ENCODE measurements at regions of chr5 and their contacts with region 1.

Region 1: GRCh38 chr5:64147849-64148441 is 17.7 kb upstream of the RNF180 start:
- DNase-seq: peak; percentile 55 to 73 (median 61)
- ATAC-seq: peak; percentile 92 to 97 (median 96)
- H3K4me3 ChIP-seq: no peak overlapping the region
- H3K27ac ChIP-seq: no peak overlapping the region
- H3K4me1 ChIP-seq: peaks cover 0 to 5% (median 0%) of the 10 kb centered on the region in 4 donors
- H3K27me3 ChIP-seq: no peaks in the 10 kb centered on the region
- CTCF ChIP-seq: peak; percentile 76 to 86 (median 78)
- POLR2A ChIP-seq: no peak

Region 2: GRCh38 chr5:64069486-64069885 is 78.5 kb before region 1 on chr5:
- intact Hi-C with region 1: no loop called
- DNase-seq: no peak
- ATAC-seq: no peak
- H3K4me3 ChIP-seq: no peak overlapping the region
- H3K27ac ChIP-seq: no peak overlapping the region
- H3K4me1 ChIP-seq: no peaks in the 10 kb centered on the region
- H3K27me3 ChIP-seq: no peaks in the 10 kb centered on the region
- CTCF ChIP-seq: no peak
- POLR2A ChIP-seq: no peak

Region 3: GRCh38 chr5:64207978-64208377 is 60.0 kb after region 1 on chr5:
- intact Hi-C with region 1: loop called in 1 of 2 experiments (anchors 10 kb)
- DNase-seq: no peak
- ATAC-seq: peak in 2 of 4 donors; percentile 34 to 45
- H3K4me3 ChIP-seq: no peak overlapping the region
- H3K27ac ChIP-seq: no peak overlapping the region
- H3K4me1 ChIP-seq: peaks cover 0 to 8% (median 0%) of the 10 kb centered on the region in 4 donors
- H3K27me3 ChIP-seq: no peaks in the 10 kb centered on the region
- CTCF ChIP-seq: peak; percentile 26 to 42 (median 40)
- POLR2A ChIP-seq: no peak

Region 4: DNA sequence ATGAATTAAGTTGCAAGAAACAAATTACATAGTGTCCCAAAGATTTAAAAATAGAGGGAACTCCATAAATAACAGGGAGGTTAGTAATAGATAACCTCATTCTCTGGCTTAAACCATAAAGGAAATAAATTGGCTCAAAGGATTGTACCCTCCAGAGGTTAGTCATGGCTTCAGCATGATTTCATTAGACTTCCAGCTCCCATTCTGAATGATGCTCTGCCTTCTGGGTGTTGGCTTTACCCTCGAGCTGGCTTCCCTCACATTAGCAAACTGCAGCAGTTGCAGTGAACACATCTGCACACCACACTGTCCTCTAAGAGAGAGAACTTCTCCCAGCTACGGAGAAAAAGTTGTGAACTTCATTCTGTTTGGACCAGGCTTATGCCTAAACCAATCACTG is 428.3 kb after region 1 on chr5:
- intact Hi-C with region 1: no loop called
- DNase-seq: no peak
- ATAC-seq: no peak
- H3K4me3 ChIP-seq: no peak overlapping the region
- H3K27ac ChIP-seq: no peak overlapping the region
- H3K4me1 ChIP-seq: no peaks in the 10 kb centered on the region
- H3K27me3 ChIP-seq: no peaks in the 10 kb centered on the region
- CTCF ChIP-seq: no peak
- POLR2A ChIP-seq: no peak

Measured in right lobe of liver (tissue), 6 donors.